Endothelial cell of umbilical vein (primary cell): ENCODE measurements at regions of chr20 and their contacts with region 1.

Region 1: GRCh38 chr20:59850018-59850641 is 83.3 kb downstream of the SYCP2 start:
- DNase-seq: peak; percentile 22
- H3K4me3 ChIP-seq: no peak overlapping the region
- H3K27ac ChIP-seq: no peak overlapping the region
- H3K4me1 ChIP-seq: no peaks in the 10 kb centered on the region
- H3K27me3 ChIP-seq: no peaks in the 10 kb centered on the region
- CTCF ChIP-seq: peak; percentile 28 to 31
- POLR2A ChIP-seq: no peak

Region 2: GRCh38 chr20:59571551-59572314 is 278.4 kb before region 1 on chr20:
- CTCF ChIA-PET with region 1: interaction called, 7 read pairs
- POLR2A ChIA-PET with region 1: no interaction called
- dilution Hi-C with region 1: no loop called
- intact Hi-C with region 1: loop called (anchors 1 kb)
- DNase-seq: peak; percentile 40
- H3K4me3 ChIP-seq: peak overlapping the region in 2 of 3 experiments; percentile 7 to 28
- H3K27ac ChIP-seq: no peak overlapping the region
- H3K4me1 ChIP-seq: no peaks in the 10 kb centered on the region
- H3K27me3 ChIP-seq: peaks cover 2% of the 10 kb centered on the region in 2 experiments
- CTCF ChIP-seq: peak; percentile 85 to 94
- POLR2A ChIP-seq: no peak

Region 3: DNA sequence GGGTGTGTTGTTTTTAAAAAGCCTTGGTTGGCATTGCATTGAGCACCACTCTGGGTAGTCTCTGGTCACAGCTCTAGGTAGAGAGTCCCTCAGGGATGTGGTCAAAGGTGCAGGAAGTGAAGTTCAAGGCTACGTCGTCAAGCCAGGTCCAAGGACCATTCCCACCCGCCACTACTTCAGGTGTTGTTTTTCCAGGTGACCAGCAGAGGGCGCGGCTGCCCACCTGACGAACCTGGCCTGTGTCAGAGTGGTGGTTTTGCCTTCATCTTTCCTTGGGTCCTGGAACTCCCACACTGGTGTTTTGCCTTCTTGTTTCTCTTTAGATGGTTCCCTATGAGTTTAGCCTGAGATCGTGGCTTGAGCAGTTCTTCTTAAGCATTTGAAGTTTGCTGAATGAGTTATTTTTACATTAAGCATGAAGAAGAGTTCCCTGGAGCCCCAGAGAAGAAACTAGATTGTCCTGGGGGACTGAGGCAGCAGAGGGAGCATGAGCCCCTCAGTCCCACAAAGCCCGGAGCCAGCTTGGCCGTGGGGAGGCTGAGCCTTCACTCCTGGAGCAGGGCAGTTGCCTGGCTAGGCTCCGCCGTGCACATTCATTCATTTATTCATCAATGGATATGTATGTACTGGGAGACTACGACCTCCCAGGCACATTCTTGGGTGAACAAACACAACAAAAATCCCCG is 251.4 kb before region 1 on chr20:
- CTCF ChIA-PET with region 1: interaction called, 5 read pairs
- POLR2A ChIA-PET with region 1: no interaction called
- dilution Hi-C with region 1: no loop called
- intact Hi-C with region 1: loop called (anchors 2 kb)
- DNase-seq: peak; percentile 2
- H3K4me3 ChIP-seq: no peak overlapping the region
- H3K27ac ChIP-seq: no peak overlapping the region
- H3K4me1 ChIP-seq: no peaks in the 10 kb centered on the region
- H3K27me3 ChIP-seq: no peaks in the 10 kb centered on the region
- CTCF ChIP-seq: peak; percentile 68 to 75
- POLR2A ChIP-seq: no peak

Region 4: DNA sequence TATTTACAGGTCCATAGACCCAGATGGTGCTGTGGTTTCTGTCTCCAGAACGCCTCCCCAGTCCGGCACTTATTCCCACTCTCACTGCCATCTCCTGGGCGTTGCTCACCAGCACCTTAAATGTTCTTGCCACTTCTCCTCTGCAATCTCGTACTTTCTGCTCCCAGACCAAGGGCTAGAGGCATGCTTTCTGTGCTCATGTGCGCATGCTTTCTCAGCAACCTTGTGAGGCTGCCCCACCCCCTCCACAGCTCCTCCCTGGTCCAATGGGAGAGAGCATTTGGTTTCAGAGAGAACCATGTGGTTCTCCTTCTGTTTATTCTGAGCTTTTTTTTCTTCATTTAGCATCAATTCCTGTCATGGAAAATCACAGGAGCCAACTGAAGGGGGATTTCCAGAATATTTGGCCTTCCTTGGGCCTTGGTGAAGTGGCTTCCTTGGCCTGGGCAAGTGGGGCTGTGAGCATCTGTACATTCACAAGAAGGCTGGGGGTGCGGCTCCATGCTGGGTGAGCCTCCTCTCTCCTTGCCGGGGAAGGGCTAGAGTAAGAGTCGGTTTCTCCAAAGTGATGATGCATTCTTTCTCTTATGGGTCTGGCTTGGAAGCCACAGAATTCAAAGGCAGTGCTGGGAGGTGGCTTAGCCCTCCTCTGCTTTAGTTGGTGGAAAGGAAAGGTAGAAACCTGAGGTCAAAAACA is 179.2 kb before region 1 on chr20:
- CTCF ChIA-PET with region 1: no interaction called
- POLR2A ChIA-PET with region 1: no interaction called
- dilution Hi-C with region 1: no loop called
- intact Hi-C with region 1: no loop called
- DNase-seq: no peak
- H3K4me3 ChIP-seq: no peak overlapping the region
- H3K27ac ChIP-seq: no peak overlapping the region
- H3K4me1 ChIP-seq: no peaks in the 10 kb centered on the region
- H3K27me3 ChIP-seq: no peaks in the 10 kb centered on the region
- CTCF ChIP-seq: no peak
- POLR2A ChIP-seq: no peak

Region 5: DNA sequence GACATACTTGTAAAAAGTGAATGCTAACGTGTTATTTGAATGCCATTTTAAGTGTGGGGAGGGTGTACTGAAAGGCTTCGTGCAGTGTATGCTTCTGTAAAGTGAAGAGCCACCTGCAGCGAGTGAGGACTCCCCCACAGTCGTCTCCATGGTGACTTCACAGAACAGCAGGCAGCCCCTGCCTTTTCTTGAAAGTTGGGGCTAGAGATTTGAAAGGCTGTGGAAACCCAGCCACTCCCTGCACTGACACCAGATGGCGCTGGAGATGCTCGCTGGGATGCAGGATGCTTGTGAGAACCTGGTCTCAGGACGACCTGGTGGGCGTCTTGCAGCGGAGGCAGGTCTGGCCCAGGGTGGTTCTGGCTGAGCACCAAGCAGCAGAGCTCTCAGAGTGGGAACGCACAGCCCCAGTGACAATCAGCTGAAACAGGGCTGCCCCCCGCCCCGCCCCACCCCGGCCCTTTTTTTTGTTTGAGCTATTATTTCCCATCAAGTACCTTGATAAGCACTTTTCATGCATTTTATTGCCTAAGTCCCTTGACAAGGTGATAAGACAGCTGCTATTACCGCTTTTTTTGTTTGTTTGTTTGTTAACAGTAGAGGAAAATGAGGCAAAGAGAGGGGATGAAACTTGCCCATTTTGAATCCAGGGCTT is 67.0 kb before region 1 on chr20:
- CTCF ChIA-PET with region 1: interaction called, 3 read pairs
- POLR2A ChIA-PET with region 1: no interaction called
- dilution Hi-C with region 1: no loop called
- intact Hi-C with region 1: loop called (anchors 1 kb)
- DNase-seq: peak; percentile 10
- H3K4me3 ChIP-seq: no peak overlapping the region
- H3K27ac ChIP-seq: no peak overlapping the region
- H3K4me1 ChIP-seq: no peaks in the 10 kb centered on the region
- H3K27me3 ChIP-seq: no peaks in the 10 kb centered on the region
- CTCF ChIP-seq: peak; percentile 69 to 82
- POLR2A ChIP-seq: no peak

Region 6: GRCh38 chr20:59920944-59921343 is 70.8 kb after region 1 on chr20:
- CTCF ChIA-PET with region 1: no interaction called
- POLR2A ChIA-PET with region 1: no interaction called
- dilution Hi-C with region 1: no loop called
- intact Hi-C with region 1: no loop called
- DNase-seq: no peak
- H3K4me3 ChIP-seq: no peak overlapping the region
- H3K27ac ChIP-seq: no peak overlapping the region
- H3K4me1 ChIP-seq: no peaks in the 10 kb centered on the region
- H3K27me3 ChIP-seq: peaks cover 0 to 3% of the 10 kb centered on the region in 2 experiments
- CTCF ChIP-seq: no peak
- POLR2A ChIP-seq: no peak